Heart right ventricle (tissue), 16 donors: ENCODE measurements at regions of chr21 and their contacts with region 1.

Region 1: GRCh38 chr21:26842976-26843932 is 2.0 kb downstream of the ADAMTS1 start:
- DNase-seq: peak; percentile 90 to 95
- ATAC-seq: peak; percentile 45 to 69 (median 65)
- H3K4me3 ChIP-seq: peak overlapping the region; percentile 60 to 95 (median 80)
- H3K27ac ChIP-seq: peak overlapping the region; percentile 93 to 99 (median 96)
- H3K4me1 ChIP-seq: peaks cover 3 to 67% (median 57%) of the 10 kb centered on the region in 9 donors
- H3K27me3 ChIP-seq: peaks cover 0 to 56% (median 0%) of the 10 kb centered on the region in 7 donors
- CTCF ChIP-seq: peak in 8 of 9 donors; percentile 26 to 62 (median 41)

Region 2: DNA sequence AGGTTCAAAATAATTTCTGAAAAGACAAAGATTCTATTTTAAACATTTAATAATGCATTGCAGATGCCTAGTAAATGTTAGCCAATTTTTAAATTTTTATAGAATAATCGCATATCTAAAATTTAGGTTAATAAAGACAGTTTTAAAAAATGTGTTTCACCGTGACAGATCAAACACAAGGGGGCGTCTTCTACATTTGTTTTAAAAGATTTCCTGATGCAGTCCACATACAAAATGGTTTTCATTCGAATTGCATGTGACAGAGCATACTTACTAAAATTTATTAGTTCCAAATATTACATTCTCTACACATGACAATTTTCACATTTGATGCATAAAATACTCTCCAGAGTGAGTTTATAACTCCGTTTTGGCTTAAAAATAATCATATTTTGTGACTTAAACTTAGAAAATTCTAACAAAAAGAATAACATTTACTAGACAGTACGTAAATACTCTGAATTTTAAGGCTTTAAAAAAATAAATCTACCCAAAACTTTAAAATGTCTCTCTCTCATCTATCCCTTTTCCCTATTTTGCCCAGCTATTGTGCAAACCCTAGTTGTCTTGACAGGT is 73.6 kb before region 1 on chr21:
- intact Hi-C with region 1: loop called (anchors 1 to 10 kb)
- DNase-seq: peak in 1 of 2 donors; percentile 45
- ATAC-seq: peak in 3 of 8 donors; percentile 39 to 59 (median 49)
- H3K4me3 ChIP-seq: no peak overlapping the region
- H3K27ac ChIP-seq: no peak overlapping the region
- H3K4me1 ChIP-seq: peaks cover 0 to 3% (median 0%) of the 10 kb centered on the region in 9 donors
- H3K27me3 ChIP-seq: no peaks in the 10 kb centered on the region
- CTCF ChIP-seq: peak; percentile 38 to 80 (median 71)

Region 3: GRCh38 chr21:27802816-27803475 is 959.7 kb after region 1 on chr21:
- intact Hi-C with region 1: loop called in 1 of 10 experiments (anchors 10 kb)
- DNase-seq: peak in 1 of 2 donors; percentile 36
- ATAC-seq: peak in 2 of 8 donors; percentile 37 to 38
- H3K4me3 ChIP-seq: no peak overlapping the region
- H3K27ac ChIP-seq: no peak overlapping the region
- H3K4me1 ChIP-seq: peaks cover 0 to 15% (median 0%) of the 10 kb centered on the region in 9 donors
- H3K27me3 ChIP-seq: no peaks in the 10 kb centered on the region
- CTCF ChIP-seq: peak; percentile 19 to 75 (median 60)

Region 4: DNA sequence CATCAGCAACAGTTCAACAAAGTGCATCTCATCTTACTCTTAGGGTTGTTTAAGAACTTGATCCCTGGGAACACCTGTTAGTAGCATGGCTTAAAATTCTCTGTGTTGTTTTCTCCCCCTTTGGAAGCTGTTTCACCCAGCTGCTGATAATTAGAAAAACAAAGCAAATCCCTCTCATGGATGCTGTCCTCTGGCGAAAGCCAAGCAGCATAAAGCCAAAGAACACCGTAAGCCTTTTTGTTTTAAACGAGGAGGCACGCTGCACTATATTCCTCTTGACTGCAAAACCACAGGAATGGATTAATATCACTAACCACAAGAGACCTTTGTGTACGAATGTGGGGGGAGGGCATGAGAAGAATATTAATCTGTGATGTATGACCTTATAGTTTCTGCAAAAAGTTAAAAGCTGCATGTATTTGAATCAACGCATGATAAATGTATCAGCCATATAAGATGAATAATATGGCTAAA is 1226.2 kb after region 1 on chr21:
- intact Hi-C with region 1: loop called in 1 of 10 experiments (anchors 10 kb)
- DNase-seq: no peak
- ATAC-seq: no peak
- H3K4me3 ChIP-seq: no peak overlapping the region
- H3K27ac ChIP-seq: no peak overlapping the region
- H3K4me1 ChIP-seq: peaks cover 0 to 32% (median 24%) of the 10 kb centered on the region in 9 donors
- H3K27me3 ChIP-seq: no peaks in the 10 kb centered on the region
- CTCF ChIP-seq: no peak

Region 5: DNA sequence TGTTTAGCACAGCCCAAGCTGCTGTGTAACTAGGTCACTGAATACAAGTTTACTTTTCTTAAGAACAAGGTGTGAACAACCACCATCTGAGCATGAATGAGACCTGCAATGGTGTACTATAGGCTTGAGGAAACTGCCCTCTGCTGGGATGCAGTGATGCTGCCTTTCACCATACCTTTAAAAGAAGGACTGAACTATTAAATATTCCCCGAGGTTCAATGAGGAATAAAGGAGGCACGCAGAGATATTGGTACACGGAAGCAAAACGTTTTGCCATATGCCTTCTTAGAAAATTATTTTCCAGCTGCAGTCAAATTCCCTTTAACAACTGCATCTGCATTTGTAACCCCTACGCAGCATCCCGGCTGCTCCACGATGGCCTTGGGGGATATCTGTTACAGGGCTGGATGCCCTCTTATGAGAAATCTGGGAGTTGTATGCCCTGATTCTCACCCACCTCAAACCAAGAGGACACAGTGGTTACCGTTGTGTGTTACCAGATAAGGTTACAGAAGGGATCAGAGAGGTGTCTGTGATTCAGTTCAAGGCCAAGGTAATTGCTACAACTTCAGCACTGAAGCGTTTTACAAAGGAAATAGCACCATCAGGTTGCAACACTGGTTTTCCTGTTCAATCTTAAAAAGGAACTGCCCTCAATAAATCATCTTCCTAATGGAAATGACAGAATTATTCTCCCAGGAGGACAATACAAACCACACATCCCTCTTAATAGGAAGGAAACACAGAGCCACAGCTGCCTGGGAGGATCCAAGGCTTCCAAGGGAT is 1679.0 kb after region 1 on chr21:
- intact Hi-C with region 1: loop called in 3 of 10 experiments (anchors 5 to 10 kb)
- DNase-seq: no peak
- ATAC-seq: peak; percentile 48 to 89 (median 77)
- H3K4me3 ChIP-seq: no peak overlapping the region
- H3K27ac ChIP-seq: peak overlapping the region; percentile 4 to 81 (median 52)
- H3K4me1 ChIP-seq: peaks cover 0 to 34% (median 17%) of the 10 kb centered on the region in 9 donors
- H3K27me3 ChIP-seq: no peaks in the 10 kb centered on the region
- CTCF ChIP-seq: peak in 6 of 9 donors; percentile 27 to 51 (median 43)

Region 6: GRCh38 chr21:28793043-28793442 is 1949.8 kb after region 1 on chr21:
- intact Hi-C with region 1: loop called in 1 of 10 experiments (anchors 5 kb)
- DNase-seq: peak in 1 of 2 donors; percentile 28
- ATAC-seq: peak in 5 of 8 donors; percentile 58 to 72 (median 64)
- H3K4me3 ChIP-seq: no peak overlapping the region
- H3K27ac ChIP-seq: no peak overlapping the region
- H3K4me1 ChIP-seq: peaks cover 0 to 19% (median 4%) of the 10 kb centered on the region in 9 donors
- H3K27me3 ChIP-seq: no peaks in the 10 kb centered on the region
- CTCF ChIP-seq: peak; percentile 11 to 69 (median 61)